Aorta (tissue), 5 donors: ENCODE measurements at regions of chr2 and their contacts with region 1.

Region 1: GRCh38 chr2:232668805-232669444 is 28.2 kb upstream of the GIGYF2 start:
- DNase-seq: no peak
- ATAC-seq: no peak
- H3K4me3 ChIP-seq: no peak overlapping the region
- H3K27ac ChIP-seq: peak overlapping the region in 1 of 2 donors; percentile 91
- H3K4me1 ChIP-seq: no peaks in the 10 kb centered on the region
- H3K27me3 ChIP-seq: no peaks in the 10 kb centered on the region

Region 2: DNA sequence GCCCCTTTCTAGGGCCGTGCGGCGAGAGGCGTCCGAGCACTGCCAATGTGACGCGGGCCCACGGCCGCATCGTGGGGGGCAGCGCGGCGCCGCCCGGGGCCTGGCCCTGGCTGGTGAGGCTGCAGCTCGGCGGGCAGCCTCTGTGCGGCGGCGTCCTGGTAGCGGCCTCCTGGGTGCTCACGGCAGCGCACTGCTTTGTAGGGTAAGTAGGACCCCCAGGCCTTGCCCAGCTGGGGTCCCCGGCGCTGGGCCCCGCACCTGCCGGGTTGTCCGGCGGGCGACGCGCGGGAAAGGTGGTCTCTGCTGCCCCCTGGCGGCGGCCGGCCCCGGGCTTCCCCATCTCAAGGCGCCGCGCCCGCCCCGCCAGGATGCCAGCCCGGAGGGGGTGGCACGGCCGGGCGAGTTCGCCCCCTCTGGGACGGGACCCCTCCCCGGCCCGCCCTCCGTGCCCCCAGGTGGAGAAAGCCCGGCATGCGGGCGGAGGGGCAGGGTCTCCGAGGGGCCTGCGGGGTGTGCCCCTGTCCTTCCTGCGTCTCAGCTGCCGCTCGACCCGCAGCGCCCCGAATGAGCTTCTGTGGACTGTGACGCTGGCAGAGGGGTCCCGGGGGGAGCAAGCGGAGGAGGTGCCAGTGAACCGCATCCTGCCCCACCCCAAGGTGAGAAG is 146.8 kb before region 1 on chr2:
- intact Hi-C with region 1: no loop called
- DNase-seq: peak; percentile 61 to 91
- ATAC-seq: no peak
- H3K4me3 ChIP-seq: no peak overlapping the region
- H3K27ac ChIP-seq: no peak overlapping the region
- H3K4me1 ChIP-seq: no peaks in the 10 kb centered on the region
- H3K27me3 ChIP-seq: no peaks in the 10 kb centered on the region

Region 3: GRCh38 chr2:232611551-232612218 is 57.2 kb before region 1 on chr2:
- intact Hi-C with region 1: loop called (anchors 2 to 5 kb)
- DNase-seq: peak; percentile 77 to 93
- ATAC-seq: peak; percentile 79
- H3K4me3 ChIP-seq: no peak overlapping the region
- H3K27ac ChIP-seq: no peak overlapping the region
- H3K4me1 ChIP-seq: no peaks in the 10 kb centered on the region
- H3K27me3 ChIP-seq: no peaks in the 10 kb centered on the region

Region 4: DNA sequence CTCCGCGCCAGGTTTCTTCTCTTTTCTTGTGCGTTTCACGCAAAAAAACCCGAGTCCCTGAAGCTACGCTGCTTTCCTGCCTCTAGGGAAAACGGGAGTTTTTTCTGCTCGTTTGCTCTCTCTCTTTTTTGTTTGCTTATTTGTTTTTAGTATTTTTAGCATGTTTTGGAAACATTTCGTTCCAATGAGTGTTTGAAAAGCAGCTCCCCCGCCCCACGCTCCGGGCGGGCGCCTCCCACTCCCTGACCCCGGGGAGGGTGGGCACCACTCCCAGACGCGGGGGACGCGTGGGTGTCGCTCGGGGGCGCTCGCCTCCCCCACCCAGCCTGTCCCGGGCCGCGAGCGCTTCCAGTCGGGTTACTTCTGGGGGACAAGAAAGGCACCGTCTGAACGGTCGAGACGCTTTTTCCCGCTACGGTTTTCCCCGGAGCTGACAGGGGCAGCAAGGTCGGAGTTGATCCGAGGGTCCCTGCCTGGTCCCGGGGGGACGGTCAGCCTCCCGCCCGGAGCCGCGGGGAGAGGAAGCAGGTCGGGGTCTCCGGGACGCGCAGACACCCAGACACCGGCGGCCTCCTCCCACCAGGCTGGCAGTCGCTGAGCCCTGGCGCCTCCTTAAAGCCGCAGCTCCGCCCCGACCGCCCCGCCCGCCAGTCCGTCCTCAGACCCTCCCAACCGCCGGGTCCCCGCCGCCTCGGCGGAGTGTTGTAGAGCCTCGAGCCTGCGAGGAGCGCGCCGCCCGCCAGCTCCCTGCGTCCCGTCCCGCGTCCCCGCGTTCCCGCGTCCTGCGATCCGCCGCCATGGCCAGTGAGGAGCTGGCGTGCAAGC is 35.8 kb before region 1 on chr2 and contains the start of gene EFHD1:
- intact Hi-C with region 1: loop called (anchors 2 to 5 kb)
- DNase-seq: peak; percentile 91 to 96
- ATAC-seq: peak; percentile 92
- H3K4me3 ChIP-seq: peak within 1 kb of the TSS; percentile 89
- H3K27ac ChIP-seq: peak within 1 kb of the TSS; percentile 91 to 95
- H3K4me1 ChIP-seq: peaks cover under 1 to 2% of the 10 kb centered on the region in 2 donors
- H3K27me3 ChIP-seq: no peaks in the 10 kb centered on the region
- total RNA-seq, gene EFHD1: 85.8 to 236 TPM